ENCODE measurements at regions of chr9 and their contacts with region 1.

Region 1: GRCh38 chr9:90773617-90774016 is 28.0 kb upstream of the SYK start:
- DNase-seq: peak; percentile 66
- H3K4me3 ChIP-seq: no peak overlapping the region
- H3K27ac ChIP-seq: peak overlapping the region; percentile 69
- H3K4me1 ChIP-seq: peaks cover 32% of the 10 kb centered on the region
- CTCF ChIP-seq: peak; percentile 78

Region 2: GRCh38 chr9:90795871-90796317 is 22.3 kb after region 1 on chr9:
- CTCF ChIA-PET with region 1: no interaction called
- POLR2A ChIA-PET with region 1: interaction called, 5 read pairs
- intact Hi-C with region 1: loop called (anchors 1 kb)
- DNase-seq: peak; percentile 60
- H3K4me3 ChIP-seq: peak overlapping the region; percentile 38
- H3K27ac ChIP-seq: peak overlapping the region; percentile 88
- H3K4me1 ChIP-seq: peaks cover 56% of the 10 kb centered on the region
- CTCF ChIP-seq: no peak

Region 3: GRCh38 chr9:90870621-90871326 is 97.2 kb after region 1 on chr9:
- CTCF ChIA-PET with region 1: no interaction called
- POLR2A ChIA-PET with region 1: no interaction called
- intact Hi-C with region 1: loop called (anchors 1 kb)
- DNase-seq: peak; percentile 69
- H3K4me3 ChIP-seq: no peak overlapping the region
- H3K27ac ChIP-seq: peak overlapping the region; percentile 41
- H3K4me1 ChIP-seq: peaks cover 14% of the 10 kb centered on the region
- CTCF ChIP-seq: peak; percentile 100